Activated CD4-positive, alpha-beta T cell treated with anti-CD3 and anti-CD28 coated beads, Interleukin-2, amount 10 ng/mL, durations not matched to agents 24 days and 14 days (primary cell): ENCODE measurements at regions of chr1 and their contacts with region 1.

Region 1: GRCh38 chr1:180533266-180533987 is 25.3 kb upstream of the OVAAL start:
- DNase-seq: peak; percentile 90
- H3K4me3 Mint-ChIP-seq: no peak overlapping the region
- H3K27ac Mint-ChIP-seq: no peak overlapping the region
- H3K4me1 Mint-ChIP-seq: peaks cover 5% of the 10 kb centered on the region
- H3K27me3 Mint-ChIP-seq: peaks cover 27% of the 10 kb centered on the region

Region 2: GRCh38 chr1:180778782-180779398 is 245.5 kb after region 1 on chr1:
- intact Hi-C with region 1: loop called (anchors 10 kb)
- DNase-seq: peak; percentile 63
- H3K4me3 Mint-ChIP-seq: no peak overlapping the region
- H3K27ac Mint-ChIP-seq: no peak overlapping the region
- H3K4me1 Mint-ChIP-seq: peaks cover 5% of the 10 kb centered on the region
- H3K27me3 Mint-ChIP-seq: no peaks in the 10 kb centered on the region

Region 3: GRCh38 chr1:180863158-180863775 is 329.8 kb after region 1 on chr1:
- intact Hi-C with region 1: loop called (anchors 5 kb)
- DNase-seq: peak; percentile 80
- H3K4me3 Mint-ChIP-seq: no peak overlapping the region
- H3K27ac Mint-ChIP-seq: no peak overlapping the region
- H3K4me1 Mint-ChIP-seq: no peaks in the 10 kb centered on the region
- H3K27me3 Mint-ChIP-seq: no peaks in the 10 kb centered on the region